AG04449 (cell line): ENCODE measurements at regions of chr14 and their contacts with region 1.

Region 1: DNA sequence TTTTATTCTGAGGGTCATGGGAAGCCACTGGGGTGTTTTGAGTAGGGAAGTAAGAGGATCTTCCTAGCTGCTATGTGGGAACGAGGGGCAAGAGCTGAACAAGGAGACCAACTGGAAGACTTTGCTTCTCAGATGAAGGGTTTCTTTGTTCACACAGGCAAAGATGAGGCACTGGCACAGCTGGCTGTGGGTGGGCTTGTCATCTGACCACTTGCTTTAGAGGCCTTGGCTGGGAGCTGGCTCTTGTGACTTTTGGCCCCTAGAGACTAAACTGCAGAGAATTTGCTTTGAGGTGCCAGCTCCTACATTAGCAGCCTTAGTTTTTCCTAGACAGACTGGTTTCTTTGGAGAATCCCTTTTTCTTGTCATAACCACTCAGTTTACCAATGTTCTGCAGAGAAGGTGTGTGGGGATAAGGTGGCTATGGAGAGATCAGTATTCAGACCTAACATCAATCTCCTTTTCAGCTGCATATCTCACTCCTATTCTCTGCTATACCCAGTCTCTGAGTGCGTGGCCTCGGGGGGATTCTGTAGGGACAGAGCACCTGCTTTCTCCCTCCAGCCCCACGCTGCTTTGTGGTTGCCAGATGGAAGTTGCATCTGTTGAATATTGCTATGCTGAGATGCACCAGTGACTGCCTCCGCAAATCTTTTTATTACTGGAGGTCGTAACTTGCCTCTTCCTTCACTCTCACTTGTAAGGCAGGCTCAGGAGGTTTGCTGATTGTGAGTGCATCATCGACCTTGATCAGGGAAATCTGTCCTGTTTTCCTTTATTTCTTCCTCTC is 12.7 kb downstream of the PPP2R5C start:
- DNase-seq: no peak
- H3K4me3 ChIP-seq: no peak overlapping the region
- CTCF ChIP-seq: no peak

Region 2: DNA sequence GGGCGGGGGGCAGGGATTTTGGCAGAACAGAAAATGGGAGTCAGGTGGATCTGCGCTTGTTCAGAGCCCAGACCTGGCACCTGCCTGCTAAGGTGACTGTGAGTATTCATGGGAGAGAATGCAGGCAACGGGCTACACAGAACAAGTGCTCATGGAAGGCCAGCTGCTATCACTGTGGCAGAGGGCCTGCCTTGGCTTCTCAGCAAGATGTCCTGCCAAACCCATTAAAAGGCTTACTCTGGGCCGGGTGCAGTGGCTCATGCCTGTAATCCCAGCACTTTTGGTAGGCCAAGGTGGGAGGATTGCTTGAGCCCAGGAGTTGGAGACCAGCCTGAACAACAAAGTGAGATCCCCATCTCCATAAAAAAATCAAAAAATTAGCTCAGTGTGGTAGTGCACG is 191.9 kb before region 1 on chr14:
- CTCF ChIA-PET with region 1: no interaction called
- POLR2A ChIA-PET with region 1: no interaction called
- DNase-seq: no peak
- H3K4me3 ChIP-seq: no peak overlapping the region
- CTCF ChIP-seq: no peak

Region 3: DNA sequence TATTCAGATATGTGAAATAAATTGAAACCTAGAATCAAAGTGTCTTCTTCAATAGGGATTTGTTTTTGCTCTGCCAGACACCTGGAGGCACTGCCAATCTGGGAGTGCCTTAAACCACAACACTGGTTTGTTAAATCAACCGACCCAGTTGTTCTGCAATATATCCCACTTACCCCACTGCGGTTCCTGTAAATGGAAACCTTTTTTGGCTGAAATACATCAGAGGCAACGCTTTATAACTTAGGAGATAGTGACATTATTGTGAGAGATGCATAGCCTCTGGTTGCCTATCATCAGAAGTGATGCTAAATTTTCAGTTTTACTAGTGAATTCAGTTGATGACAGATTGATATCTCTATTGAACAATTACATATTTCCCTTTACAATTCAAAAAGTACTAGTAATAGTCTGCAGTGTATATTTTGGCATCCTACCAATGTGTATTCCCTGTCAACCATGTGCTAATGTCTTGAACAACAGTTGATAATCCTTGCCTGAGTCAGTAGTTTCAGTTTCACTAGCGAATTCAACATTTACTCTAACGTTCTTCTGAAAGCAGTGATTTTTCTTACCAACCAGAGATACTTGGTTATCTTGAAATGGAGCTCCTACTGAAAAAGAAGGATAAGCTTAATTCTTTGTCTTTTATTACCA is 17.8 kb after region 1 on chr14:
- CTCF ChIA-PET with region 1: interaction called, 17 read pairs
- POLR2A ChIA-PET with region 1: no interaction called
- DNase-seq: peak; percentile 12
- H3K4me3 ChIP-seq: peak overlapping the region; percentile 36
- CTCF ChIP-seq: no peak

Region 4: GRCh38 chr14:101810897-101811621 is 36.9 kb after region 1 on chr14:
- CTCF ChIA-PET with region 1: interaction called, 20 read pairs
- POLR2A ChIA-PET with region 1: no interaction called
- DNase-seq: no peak
- H3K4me3 ChIP-seq: peak overlapping the region; percentile 89
- CTCF ChIP-seq: no peak